Aorta (tissue), 5 donors: ENCODE measurements at regions of chr2 and their contacts with region 1.

Region 1: GRCh38 chr2:95402370-95403203 is at the start of gene FAHD2A:
- DNase-seq: peak; percentile 98 to 99
- ATAC-seq: peak; percentile 98
- H3K4me3 ChIP-seq: peak within 1 kb of the TSS; percentile 36 to 80
- H3K27ac ChIP-seq: peak within 1 kb of the TSS in 1 of 2 donors; percentile 54
- H3K4me1 ChIP-seq: no peaks in the 10 kb centered on the region
- H3K27me3 ChIP-seq: no peaks in the 10 kb centered on the region
- total RNA-seq, gene FAHD2A: 17.7 to 23.3 TPM

Region 2: DNA sequence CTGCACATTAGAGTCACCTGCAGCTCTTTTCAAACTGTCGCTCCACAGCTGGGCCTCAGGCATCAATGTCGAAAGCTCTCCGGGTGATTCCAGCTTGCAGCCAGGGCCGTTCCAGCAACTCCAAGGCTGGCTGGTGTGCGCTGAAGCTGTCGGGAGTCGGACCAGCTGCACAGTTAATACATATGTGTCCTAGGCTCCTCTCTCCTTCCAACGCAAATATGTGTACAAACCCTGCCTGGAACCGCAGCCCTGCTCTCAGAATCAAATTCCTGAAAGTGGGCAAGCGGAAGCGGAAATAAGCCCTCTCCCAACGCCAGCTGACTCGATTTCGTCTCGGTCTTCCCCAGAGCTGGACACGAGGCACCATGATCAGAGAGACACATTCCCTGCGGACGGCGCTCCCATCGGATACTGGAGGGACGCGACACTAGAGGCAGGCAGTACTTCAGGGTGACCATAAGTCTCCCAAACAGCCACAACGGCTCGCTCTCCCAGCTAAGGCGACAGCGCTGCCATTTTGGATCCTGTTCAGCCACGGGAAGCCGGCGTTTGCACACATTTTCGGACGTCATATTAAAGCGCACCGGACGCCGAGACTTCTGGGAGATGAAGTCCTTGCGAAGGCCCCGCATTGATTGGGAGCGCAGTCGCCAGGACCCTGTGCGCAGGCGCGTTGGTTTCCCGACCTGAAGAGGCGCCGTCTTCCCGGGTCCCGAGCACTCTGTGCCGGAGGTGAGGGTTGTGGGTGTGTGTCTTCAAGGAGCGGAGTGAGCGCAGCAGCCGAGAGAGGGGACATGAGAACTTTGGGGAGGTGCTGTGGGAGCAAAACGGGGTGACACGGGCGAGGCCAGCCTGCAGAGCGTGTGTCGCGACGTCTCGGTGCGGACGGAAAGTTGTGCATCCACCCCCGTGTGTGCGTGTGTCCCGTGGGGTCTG is 237.2 kb before region 1 on chr2 and contains the start of gene ZNF2:
- intact Hi-C with region 1: loop called in 1 of 2 experiments (anchors 5 kb)
- DNase-seq: peak; percentile 99
- ATAC-seq: peak; percentile 98
- H3K4me3 ChIP-seq: peak within 1 kb of the TSS; percentile 55 to 97
- H3K27ac ChIP-seq: peak within 1 kb of the TSS; percentile 10 to 94
- H3K4me1 ChIP-seq: no peaks in the 10 kb centered on the region
- H3K27me3 ChIP-seq: no peaks in the 10 kb centered on the region
- total RNA-seq, gene ZNF2: 3.1 to 5.9 TPM

Region 3: GRCh38 chr2:95240091-95240490 is 162.5 kb before region 1 on chr2:
- intact Hi-C with region 1: no loop called
- DNase-seq: no peak
- ATAC-seq: no peak
- H3K4me3 ChIP-seq: no peak overlapping the region
- H3K27ac ChIP-seq: no peak overlapping the region
- H3K4me1 ChIP-seq: no peaks in the 10 kb centered on the region
- H3K27me3 ChIP-seq: no peaks in the 10 kb centered on the region

Region 4: DNA sequence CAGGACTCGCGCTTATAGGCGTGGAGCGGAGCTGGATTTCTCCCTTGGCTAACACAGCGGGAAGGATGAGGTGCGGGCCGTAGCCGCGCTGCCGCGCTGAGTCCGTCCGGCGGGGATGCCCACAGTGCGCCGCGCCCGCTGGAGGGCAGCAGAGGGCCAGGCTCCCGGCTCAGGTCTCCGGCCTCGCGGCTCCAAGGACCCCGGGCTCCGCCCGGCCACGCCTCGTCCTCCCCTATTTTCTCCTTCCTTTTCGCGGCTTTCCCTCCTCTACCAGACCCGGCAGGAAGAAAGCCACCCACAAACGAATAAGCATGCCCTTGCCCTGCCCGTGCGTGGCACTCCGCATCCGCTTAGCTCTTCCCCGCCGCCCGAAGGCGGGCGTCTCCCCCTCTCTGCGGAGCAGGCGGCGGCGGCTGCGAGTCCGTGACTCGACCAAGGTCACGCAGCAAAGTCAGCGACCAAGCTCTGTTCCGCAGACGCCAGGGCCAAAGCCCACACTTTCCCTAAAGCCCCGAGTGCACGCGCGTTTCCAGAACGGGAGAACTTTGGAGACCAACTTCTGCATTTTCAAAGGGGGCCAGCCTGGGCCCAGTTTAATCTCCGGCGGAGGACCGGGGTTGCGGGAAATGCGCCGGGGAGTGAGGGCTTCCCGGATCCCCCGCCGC is 56.9 kb before region 1 on chr2:
- intact Hi-C with region 1: loop called in 1 of 2 experiments (anchors 1 kb)
- DNase-seq: peak; percentile 87 to 97
- ATAC-seq: peak; percentile 93
- H3K4me3 ChIP-seq: peak overlapping the region; percentile 76 to 82
- H3K27ac ChIP-seq: peak overlapping the region in 1 of 2 donors; percentile 55
- H3K4me1 ChIP-seq: no peaks in the 10 kb centered on the region
- H3K27me3 ChIP-seq: no peaks in the 10 kb centered on the region